ENCODE measurements at regions of chr1 and their contacts with region 1.

Region 1: DNA sequence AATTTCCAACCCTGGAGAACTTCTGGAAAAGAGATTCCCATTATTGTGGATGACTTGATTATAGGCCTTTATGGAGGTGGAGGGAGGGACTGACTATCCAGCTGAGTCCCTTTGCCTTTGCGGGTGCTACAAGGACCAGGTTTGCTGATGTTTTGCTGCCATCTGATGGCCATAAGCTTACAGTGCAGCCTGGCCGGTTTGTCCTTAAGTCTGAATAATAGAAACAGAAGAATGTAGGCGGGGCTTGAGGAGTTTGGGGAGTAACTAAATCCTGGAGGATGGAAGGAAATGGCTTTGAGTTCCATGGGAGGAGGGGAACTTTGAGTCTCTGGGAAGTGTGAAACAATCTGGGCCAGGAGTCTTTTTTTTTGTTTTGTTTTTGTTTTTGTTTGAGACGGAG is 55.7 kb upstream of the CD1D start:
- DNase-seq: peak; percentile 94
- H3K4me3 ChIP-seq: no peak overlapping the region
- H3K27ac ChIP-seq: no peak overlapping the region
- H3K4me1 ChIP-seq: no peaks in the 10 kb centered on the region
- H3K27me3 ChIP-seq: no peaks in the 10 kb centered on the region
- CTCF ChIP-seq: peak; percentile 81 to 96 (median 96)
- EP300 ChIP-seq: no peak
- POLR2A ChIP-seq: no peak

Region 2: DNA sequence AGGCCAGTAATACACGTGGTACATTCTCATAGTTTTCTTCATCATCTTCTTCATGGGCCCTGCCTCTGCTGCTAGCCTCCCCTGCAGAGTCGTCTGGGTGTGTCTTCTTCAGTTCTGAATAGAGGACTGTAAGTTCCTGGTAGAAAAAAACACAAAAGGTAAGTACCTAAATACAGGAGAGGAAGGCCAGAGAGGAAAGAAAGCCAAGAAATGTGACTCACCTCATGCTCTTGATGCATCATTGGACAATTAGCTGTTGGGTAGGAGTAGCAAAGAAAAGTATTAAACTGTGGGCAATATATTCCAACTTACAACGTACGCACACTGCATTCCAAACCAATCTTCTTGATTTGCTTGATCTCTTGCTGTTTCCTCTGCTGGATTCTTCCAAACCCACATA is 446.3 kb before region 1 on chr1:
- intact Hi-C with region 1: no loop called
- DNase-seq: no peak
- H3K4me3 ChIP-seq: no peak overlapping the region
- H3K27ac ChIP-seq: no peak overlapping the region
- H3K4me1 ChIP-seq: no peaks in the 10 kb centered on the region
- H3K27me3 ChIP-seq: no peaks in the 10 kb centered on the region
- CTCF ChIP-seq: no peak
- EP300 ChIP-seq: no peak
- POLR2A ChIP-seq: no peak

Region 3: GRCh38 chr1:157963713-157964112 is 161.3 kb before region 1 on chr1:
- intact Hi-C with region 1: loop called (anchors 1 kb)
- DNase-seq: peak; percentile 75
- H3K4me3 ChIP-seq: no peak overlapping the region
- H3K27ac ChIP-seq: no peak overlapping the region
- H3K4me1 ChIP-seq: peaks cover 0 to 22% (median 15%) of the 10 kb centered on the region in 4 donors
- H3K27me3 ChIP-seq: no peaks in the 10 kb centered on the region
- CTCF ChIP-seq: peak; percentile 84 to 94 (median 90)
- EP300 ChIP-seq: no peak
- POLR2A ChIP-seq: no peak

Region 4: GRCh38 chr1:158087320-158087927 is 37.6 kb before region 1 on chr1:
- intact Hi-C with region 1: loop called (anchors 5 kb)
- DNase-seq: peak; percentile 78
- H3K4me3 ChIP-seq: no peak overlapping the region
- H3K27ac ChIP-seq: no peak overlapping the region
- H3K4me1 ChIP-seq: no peaks in the 10 kb centered on the region
- H3K27me3 ChIP-seq: no peaks in the 10 kb centered on the region
- CTCF ChIP-seq: peak; percentile 65 to 89 (median 80)
- EP300 ChIP-seq: no peak
- POLR2A ChIP-seq: no peak

Region 5: DNA sequence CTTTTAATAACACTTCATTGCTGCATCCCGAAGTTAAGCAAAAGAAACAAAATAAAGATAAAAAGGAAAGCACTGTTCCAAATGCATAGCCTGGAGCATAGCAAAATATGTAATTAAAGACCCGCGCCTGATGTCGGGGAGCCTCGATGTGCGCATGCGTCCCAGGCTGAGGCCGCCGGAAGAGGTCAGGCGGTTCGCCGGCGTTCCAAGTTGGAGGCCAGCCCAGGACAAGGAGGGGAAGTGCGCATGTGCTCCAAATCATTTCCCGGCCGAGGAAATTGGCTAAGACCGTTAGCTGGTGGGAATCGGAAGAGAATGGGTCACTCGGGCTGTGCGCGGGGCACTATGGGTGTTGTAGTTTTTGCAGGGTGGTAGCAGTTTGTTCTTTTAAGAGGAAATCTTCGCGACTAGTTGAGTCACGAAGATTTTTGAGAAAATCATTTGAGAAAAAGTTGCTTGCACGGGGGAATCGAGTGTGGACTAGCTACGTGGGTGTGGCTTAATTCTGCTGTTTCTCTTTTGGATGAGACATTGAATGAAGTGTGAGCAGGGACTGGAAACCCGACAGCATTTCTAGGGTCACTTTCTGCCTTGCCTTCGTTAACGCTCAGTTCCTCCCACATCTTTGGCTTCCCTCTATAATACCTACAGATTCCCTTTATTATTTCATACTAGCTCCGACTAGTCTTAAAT is 24.7 kb after region 1 on chr1:
- intact Hi-C with region 1: no loop called
- DNase-seq: peak; percentile 98
- H3K4me3 ChIP-seq: peak overlapping the region; percentile 23 to 44 (median 38)
- H3K27ac ChIP-seq: peak overlapping the region; percentile 53 to 77 (median 72)
- H3K4me1 ChIP-seq: peaks cover 0 to 32% (median 25%) of the 10 kb centered on the region in 4 donors
- H3K27me3 ChIP-seq: no peaks in the 10 kb centered on the region
- CTCF ChIP-seq: no peak
- EP300 ChIP-seq: peak; percentile 31 to 94 (median 68)
- POLR2A ChIP-seq: no peak

Measured in sigmoid colon (tissue), 7 donors.